ENCODE measurements at regions of chr11 and their contacts with region 1.

Region 1: GRCh38 chr11:119728651-119729580 is at the start of gene NECTIN1:
- DNase-seq: peak; percentile 84
- H3K4me3 Mint-ChIP-seq: peak within 1 kb of the TSS; percentile 77
- H3K27ac Mint-ChIP-seq: peak within 1 kb of the TSS; percentile 32
- H3K4me1 Mint-ChIP-seq: peaks cover 13% of the 10 kb centered on the region
- H3K27me3 Mint-ChIP-seq: peaks cover 57% of the 10 kb centered on the region
- total RNA-seq, gene NECTIN1: 1.7 to 1.9 TPM

Region 2: DNA sequence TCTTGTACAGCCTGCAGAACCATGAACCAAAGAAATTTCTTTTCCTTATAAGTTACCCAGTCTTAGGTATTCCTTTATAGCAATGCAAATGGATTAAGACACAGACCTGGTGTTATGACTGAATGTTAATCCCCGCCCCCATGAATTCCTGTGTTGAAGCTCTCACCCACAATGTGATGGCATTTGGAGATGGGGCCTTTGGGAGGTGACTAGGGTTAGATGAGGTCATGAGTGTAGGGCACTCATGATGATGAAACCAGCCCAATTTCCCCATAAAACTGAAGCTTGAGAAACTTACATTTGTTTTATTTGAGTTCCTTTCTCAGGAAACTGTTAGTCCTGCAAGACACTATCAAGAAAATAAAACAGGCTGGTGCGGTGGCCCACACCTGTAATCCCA is 190.2 kb before region 1 on chr11:
- CTCF ChIA-PET with region 1: no interaction called
- POLR2A ChIA-PET with region 1: no interaction called
- DNase-seq: no peak
- H3K4me3 Mint-ChIP-seq: no peak overlapping the region
- H3K27ac Mint-ChIP-seq: no peak overlapping the region
- H3K4me1 Mint-ChIP-seq: no peaks in the 10 kb centered on the region
- H3K27me3 Mint-ChIP-seq: peaks cover 13% of the 10 kb centered on the region

Region 3: DNA sequence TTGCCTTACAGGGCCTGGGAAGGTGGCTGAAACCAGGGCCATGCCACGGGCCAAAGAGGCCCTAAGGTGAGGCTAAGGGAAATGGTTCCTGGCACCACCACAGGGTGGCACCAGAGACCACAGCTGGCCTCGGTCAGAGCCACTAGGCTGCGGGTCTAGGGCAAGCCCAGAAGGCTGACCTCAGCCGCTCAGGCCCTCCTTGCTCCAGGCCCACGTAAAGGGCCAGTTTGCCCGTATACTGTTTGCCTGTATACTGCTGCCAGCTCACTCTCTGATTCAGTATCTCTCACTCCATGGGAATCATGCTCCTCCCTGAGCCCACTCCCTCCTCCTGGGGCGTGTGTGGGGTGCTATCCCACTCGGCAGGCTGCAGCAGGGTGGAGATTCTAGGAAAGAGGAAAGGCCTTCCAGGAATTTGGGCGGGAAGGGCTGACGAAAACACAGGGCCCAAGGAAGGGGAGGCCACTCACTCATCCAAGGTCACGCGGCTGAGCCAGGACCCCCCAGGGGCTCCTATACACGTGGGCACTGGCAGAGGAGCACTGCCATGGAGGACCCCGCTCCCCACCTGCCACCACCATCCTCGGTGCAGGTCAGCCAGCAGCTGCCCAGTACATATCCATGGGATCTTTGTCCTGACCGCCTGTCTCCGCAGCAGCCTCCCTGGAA is 62.3 kb before region 1 on chr11:
- CTCF ChIA-PET with region 1: interaction called, 49 read pairs
- POLR2A ChIA-PET with region 1: interaction called, 3 read pairs
- DNase-seq: peak; percentile 69
- H3K4me3 Mint-ChIP-seq: no peak overlapping the region
- H3K27ac Mint-ChIP-seq: no peak overlapping the region
- H3K4me1 Mint-ChIP-seq: no peaks in the 10 kb centered on the region
- H3K27me3 Mint-ChIP-seq: peaks cover 10% of the 10 kb centered on the region

Region 4: DNA sequence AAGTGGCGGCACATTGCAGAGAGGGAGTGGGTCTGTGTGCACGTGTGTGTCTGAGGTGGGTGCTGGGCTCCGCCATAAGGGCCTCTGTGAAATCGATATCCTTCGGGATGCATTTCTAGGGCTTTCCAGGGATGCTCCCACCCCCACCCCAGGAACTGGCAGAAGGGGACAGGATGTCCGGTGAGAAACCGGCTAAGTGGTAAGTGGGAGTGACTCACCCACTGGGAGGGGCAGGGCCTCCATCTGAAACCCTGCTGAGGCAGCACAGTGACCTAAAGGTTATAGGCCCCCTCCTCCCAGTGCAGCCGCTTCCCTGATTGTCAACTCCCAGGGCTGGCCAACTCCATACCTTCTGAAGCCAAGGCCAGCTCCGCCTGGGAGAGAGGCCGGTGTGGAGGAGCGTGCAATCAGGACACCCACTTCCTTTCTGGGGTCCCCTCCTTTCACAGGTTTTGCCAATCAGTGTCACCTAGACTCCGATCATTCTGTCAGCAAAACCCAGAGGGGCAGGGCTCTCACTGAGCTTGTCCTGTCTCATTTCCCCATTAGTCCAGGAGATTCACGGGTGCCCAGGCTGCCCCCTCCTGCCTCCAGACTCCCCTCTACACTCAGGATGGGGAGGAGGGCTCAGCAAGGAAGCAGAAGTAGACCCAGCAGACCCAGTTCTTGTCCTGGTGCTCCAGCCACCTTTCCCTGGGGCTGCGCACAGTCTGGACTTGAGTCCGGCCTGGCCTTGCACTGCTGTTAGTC is 44.4 kb before region 1 on chr11:
- CTCF ChIA-PET with region 1: interaction called, 44 read pairs
- POLR2A ChIA-PET with region 1: interaction called, 4 read pairs
- DNase-seq: peak; percentile 49
- H3K4me3 Mint-ChIP-seq: no peak overlapping the region
- H3K27ac Mint-ChIP-seq: peak overlapping the region; percentile 42
- H3K4me1 Mint-ChIP-seq: peaks cover 32% of the 10 kb centered on the region
- H3K27me3 Mint-ChIP-seq: peaks cover 15% of the 10 kb centered on the region

Region 5: DNA sequence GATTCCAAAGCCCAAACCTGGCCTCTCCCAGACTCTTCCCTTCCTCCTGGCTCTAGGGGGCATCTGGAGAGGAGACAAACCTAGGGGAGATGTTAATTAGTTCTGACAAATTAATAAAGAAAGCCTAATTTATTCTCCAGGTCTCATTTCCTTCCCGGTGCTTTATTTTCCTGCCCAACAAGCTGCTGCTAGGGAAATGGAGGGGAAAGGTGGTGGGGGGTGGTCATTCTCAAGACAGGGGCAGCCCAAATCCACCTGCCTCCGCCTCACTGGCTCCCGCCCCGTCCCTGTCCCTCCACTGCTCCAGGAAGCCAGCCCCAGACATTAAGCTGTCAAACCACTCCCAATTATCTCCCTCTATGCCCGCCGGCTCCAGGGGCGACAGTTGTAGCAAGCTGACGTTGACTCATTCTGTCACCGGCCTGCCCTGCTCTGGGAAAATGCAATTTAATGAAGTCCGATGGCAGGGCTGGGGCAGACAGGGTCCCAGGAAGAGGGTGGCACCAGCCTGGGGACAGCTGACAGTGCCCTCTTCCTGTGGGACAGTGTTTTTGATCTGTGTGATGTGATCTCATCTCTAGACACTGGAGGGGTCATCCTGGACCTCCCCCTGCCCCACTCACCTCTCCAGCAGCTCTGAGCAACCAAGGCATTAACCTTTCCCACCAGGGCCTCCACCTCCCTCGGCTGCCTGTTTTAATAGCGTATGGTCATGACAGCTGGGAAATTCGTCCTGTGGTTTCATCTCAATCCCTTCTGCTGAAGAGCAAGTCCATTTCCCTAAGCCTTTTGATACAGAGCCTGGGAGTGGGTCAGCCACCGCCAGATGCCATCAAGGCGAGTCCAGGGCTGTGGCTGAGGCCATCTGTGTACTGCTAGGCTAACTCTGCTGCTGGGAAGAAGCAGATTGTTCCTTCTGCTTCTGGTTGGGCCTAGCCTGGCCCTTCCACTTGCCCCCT is 27.0 kb before region 1 on chr11:
- CTCF ChIA-PET with region 1: interaction called, 17 read pairs
- POLR2A ChIA-PET with region 1: no interaction called
- DNase-seq: no peak
- H3K4me3 Mint-ChIP-seq: no peak overlapping the region
- H3K27ac Mint-ChIP-seq: no peak overlapping the region
- H3K4me1 Mint-ChIP-seq: peaks cover 6% of the 10 kb centered on the region
- H3K27me3 Mint-ChIP-seq: peaks cover 2% of the 10 kb centered on the region

Region 6: GRCh38 chr11:119907878-119908572 is 179.1 kb after region 1 on chr11:
- CTCF ChIA-PET with region 1: no interaction called
- POLR2A ChIA-PET with region 1: no interaction called
- DNase-seq: no peak
- H3K4me3 Mint-ChIP-seq: no peak overlapping the region
- H3K27ac Mint-ChIP-seq: no peak overlapping the region
- H3K4me1 Mint-ChIP-seq: no peaks in the 10 kb centered on the region
- H3K27me3 Mint-ChIP-seq: peaks cover 12% of the 10 kb centered on the region

Measured in activated CD4-positive, alpha-beta memory T cell treated with anti-CD3 and anti-CD28 coated beads, Interleukin-2, amount 10 ng/mL, durations not matched to agents 7 days and 5 days (primary cell).